Activated CD4-positive, alpha-beta memory T cell treated with anti-CD3 and anti-CD28 coated beads for 36 hours (primary cell): ENCODE measurements at regions of chr16 and their contacts with region 1.

Region 1: DNA sequence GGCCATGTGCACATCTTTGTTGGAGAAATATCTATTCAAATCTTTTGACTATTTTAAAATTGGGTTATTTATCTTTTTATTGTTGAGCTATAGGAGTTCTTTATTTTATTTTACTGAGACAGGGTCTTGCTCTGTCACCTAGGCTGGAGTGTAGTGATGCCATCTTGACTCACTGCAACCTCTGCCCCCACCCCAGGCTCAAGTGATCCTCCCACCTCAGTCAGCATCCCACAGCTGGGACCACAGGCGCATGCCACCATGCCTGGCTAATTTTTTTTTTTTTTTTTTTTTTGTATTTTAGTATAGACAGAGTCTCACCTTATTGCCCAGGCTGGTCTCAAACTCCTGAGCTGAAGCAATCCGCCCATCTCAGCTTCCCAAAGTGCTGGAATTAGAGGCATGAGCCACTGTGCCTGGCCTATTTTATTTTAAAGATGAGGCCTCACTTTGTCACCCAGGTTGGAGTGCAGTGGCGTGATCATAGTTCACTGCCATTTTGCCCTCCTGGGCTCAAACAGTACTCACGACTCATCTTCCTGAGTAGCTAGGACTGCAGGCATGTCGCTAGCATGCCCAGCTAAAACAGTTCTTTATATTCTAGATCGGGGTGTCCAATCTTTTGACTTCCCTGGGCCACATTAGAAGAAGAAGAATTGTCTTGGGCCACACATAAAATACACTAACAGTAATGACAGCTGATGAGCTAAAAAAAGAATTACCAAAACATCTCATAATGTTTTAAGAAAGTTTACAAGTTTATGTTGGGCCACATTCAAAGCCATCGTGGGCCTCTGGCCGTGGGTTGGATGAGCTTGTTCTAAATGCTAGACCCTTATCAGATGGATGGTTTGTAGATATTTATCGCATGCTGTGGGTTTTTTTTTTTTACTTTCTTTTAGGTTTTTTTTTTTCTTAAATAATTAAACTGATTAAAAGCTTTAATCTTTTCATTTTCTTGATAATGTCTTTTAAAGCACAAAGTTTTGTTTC is 13.7 kb downstream of the TENT4B start:
- DNase-seq: peak; percentile 50
- H3K4me3 Mint-ChIP-seq: no peak overlapping the region
- H3K27ac Mint-ChIP-seq: peak overlapping the region; percentile 80
- H3K4me1 Mint-ChIP-seq: peaks cover 55% of the 10 kb centered on the region
- H3K27me3 Mint-ChIP-seq: no peaks in the 10 kb centered on the region

Region 2: GRCh38 chr16:50121721-50122445 is 44.9 kb before region 1 on chr16:
- CTCF ChIA-PET with region 1: interaction called, 3 read pairs
- POLR2A ChIA-PET with region 1: no interaction called
- intact Hi-C with region 1: loop called (anchors 5 kb)
- DNase-seq: peak; percentile 81
- H3K4me3 Mint-ChIP-seq: no peak overlapping the region
- H3K27ac Mint-ChIP-seq: peak overlapping the region; percentile 10
- H3K4me1 Mint-ChIP-seq: peaks cover 15% of the 10 kb centered on the region
- H3K27me3 Mint-ChIP-seq: no peaks in the 10 kb centered on the region